Posterior vena cava (tissue), 2 donors: ENCODE measurements at regions of chr17 and their contacts with region 1.

Region 1: GRCh38 chr17:33832262-33832661 is 422.8 kb upstream of the CCL2 start:
- DNase-seq: no peak

Region 2: GRCh38 chr17:32828822-32829221 is 1003.4 kb before region 1 on chr17:
- intact Hi-C with region 1: no loop called
- DNase-seq: no peak

Region 3: GRCh38 chr17:33696102-33696501 is 136.2 kb before region 1 on chr17:
- intact Hi-C with region 1: no loop called
- DNase-seq: no peak

Region 4: GRCh38 chr17:33811004-33811760 is 21.1 kb before region 1 on chr17:
- intact Hi-C with region 1: no loop called
- DNase-seq: no peak

Region 5: GRCh38 chr17:34024806-34025551 is 192.7 kb after region 1 on chr17:
- intact Hi-C with region 1: loop called in 1 of 2 experiments (anchors 10 kb)
- DNase-seq: no peak